SK-N-SH (cell line): ENCODE measurements at regions of chr10 and their contacts with region 1.

Region 1: DNA sequence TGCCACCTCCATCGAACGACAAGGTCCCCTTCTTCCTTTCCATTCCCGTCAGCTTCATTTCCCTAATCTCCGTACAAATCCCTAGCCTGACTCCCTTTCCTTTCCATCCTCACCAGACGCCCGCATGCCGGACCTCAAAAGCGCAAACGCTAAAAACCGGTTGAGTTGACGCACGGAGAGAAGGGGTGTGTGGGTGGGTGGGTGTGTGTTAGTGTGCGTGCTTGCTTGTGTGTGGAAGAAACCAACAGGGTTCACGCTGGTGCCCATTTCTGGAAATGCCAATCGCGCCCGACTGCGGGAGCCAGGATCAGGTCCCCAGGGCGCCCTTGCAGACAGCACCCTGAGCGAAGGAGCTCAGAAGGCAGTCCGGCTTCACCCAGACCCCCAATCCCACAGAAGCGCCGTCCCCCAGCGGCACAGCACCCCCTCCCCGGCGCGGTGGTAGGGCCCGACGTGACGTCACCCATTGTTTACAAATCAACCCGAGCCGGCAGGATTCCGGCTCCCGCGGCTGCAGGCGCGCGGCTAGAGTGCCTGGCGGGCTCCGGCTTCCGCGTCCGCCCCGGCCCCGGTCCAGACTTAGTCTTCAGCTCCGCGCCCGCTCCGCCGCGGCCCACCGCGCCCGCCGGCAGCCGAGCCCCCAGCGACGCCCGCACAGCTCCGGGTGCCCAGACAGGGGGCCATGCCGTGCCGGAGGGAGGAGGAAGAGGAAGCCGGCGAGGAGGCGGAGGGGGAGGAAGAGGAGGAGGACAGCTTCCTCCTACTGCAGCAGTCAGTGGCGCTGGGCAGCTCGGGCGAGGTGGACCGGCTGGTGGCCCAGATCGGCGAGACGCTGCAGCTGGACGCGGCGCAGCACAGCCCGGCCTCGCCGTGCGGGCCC is at the start of gene FRAT1:
- DNase-seq: peak; percentile 89
- H3K4me3 ChIP-seq: peak within 1 kb of the TSS; percentile 67 to 82
- H3K27ac ChIP-seq: peak within 1 kb of the TSS; percentile 89 to 96
- H3K4me1 ChIP-seq: peaks cover 0 to 5% of the 10 kb centered on the region in 2 experiments; a peak in 1 of 4 replicates
- H3K27me3 ChIP-seq: no peaks in the 10 kb centered on the region
- CTCF ChIP-seq: no peak
- EP300 ChIP-seq: no peak; a peak in 1 of 4 replicates
- RAD21 ChIP-seq: no peak
- polyA plus RNA-seq, gene FRAT1: 1.3 and 1.8 TPM in 2 replicates

Region 2: GRCh38 chr10:97334370-97335175 is 15.6 kb after region 1 on chr10 and contains the start of gene FRAT2:
- CTCF ChIA-PET with region 1: interaction called, 15 read pairs
- POLR2A ChIA-PET with region 1: interaction called, 7 read pairs
- DNase-seq: peak; percentile 99
- H3K4me3 ChIP-seq: peak within 1 kb of the TSS; percentile 77 to 83
- H3K27ac ChIP-seq: peak within 1 kb of the TSS; percentile 76 to 97
- H3K4me1 ChIP-seq: peaks cover 0 to 21% of the 10 kb centered on the region in 2 experiments; a peak in 1 of 4 replicates
- H3K27me3 ChIP-seq: no peaks in the 10 kb centered on the region
- CTCF ChIP-seq: no peak
- EP300 ChIP-seq: peak in 1 of 2 experiments; percentile 57; a peak in 1 of 4 replicates
- RAD21 ChIP-seq: no peak
- polyA plus RNA-seq, gene FRAT2: 2.3 and 2.4 TPM in 2 replicates

Region 3: DNA sequence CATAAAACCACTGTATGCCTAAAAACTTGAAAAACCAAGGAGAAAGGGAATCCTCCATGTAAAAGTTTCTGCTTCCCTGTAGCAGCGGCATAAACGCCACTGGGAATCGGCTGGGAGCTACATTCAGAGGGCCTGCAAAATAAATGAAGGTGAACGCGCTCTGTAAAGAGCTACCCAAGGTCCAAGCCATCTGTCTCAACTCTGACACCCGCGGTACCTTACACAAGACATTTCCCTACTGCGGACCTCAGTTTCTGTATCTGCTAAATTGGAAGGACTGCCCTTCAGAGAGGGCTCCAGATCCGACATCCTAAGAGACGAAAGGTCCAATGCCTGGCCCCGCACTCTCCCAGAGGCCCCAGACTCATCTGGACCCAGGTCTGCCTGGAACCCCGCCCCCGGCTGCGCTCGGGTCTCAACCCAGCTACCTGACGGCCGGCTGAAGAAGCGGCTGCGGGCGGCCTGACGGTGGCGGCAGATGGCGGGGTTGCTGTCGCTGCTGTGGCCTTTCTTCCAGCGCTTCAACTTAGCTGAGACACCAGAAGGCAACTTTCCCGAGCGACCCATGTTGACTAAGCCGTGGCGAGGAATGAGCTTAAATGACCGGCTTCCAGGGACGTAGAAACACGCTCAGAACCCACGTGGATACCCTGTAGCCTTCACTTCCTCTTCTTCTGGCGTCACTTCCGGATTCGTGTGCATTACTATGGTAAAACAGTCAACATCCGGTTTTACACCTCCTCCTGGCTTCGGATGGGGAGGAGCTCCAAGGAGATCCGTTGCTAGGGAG is 81.8 kb after region 1 on chr10 and contains the start of gene RRP12:
- CTCF ChIA-PET with region 1: no interaction called
- POLR2A ChIA-PET with region 1: interaction called, 11 read pairs
- DNase-seq: peak; percentile 94
- H3K4me3 ChIP-seq: peak within 1 kb of the TSS; percentile 73 to 84
- H3K27ac ChIP-seq: peak within 1 kb of the TSS; percentile 36 to 91
- H3K4me1 ChIP-seq: peaks cover 0 to 3% of the 10 kb centered on the region in 2 experiments; a peak in 2 of 4 replicates
- H3K27me3 ChIP-seq: no peaks in the 10 kb centered on the region
- CTCF ChIP-seq: no peak; the same call in 1 of the 2 replicates
- EP300 ChIP-seq: no peak
- RAD21 ChIP-seq: no peak
- polyA plus RNA-seq, gene RRP12: 40.9 and 46.4 TPM in 2 replicates